Dorsolateral prefrontal cortex (tissue), 120 donors: ENCODE measurements at regions of chr9 and their contacts with region 1.

Region 1: DNA sequence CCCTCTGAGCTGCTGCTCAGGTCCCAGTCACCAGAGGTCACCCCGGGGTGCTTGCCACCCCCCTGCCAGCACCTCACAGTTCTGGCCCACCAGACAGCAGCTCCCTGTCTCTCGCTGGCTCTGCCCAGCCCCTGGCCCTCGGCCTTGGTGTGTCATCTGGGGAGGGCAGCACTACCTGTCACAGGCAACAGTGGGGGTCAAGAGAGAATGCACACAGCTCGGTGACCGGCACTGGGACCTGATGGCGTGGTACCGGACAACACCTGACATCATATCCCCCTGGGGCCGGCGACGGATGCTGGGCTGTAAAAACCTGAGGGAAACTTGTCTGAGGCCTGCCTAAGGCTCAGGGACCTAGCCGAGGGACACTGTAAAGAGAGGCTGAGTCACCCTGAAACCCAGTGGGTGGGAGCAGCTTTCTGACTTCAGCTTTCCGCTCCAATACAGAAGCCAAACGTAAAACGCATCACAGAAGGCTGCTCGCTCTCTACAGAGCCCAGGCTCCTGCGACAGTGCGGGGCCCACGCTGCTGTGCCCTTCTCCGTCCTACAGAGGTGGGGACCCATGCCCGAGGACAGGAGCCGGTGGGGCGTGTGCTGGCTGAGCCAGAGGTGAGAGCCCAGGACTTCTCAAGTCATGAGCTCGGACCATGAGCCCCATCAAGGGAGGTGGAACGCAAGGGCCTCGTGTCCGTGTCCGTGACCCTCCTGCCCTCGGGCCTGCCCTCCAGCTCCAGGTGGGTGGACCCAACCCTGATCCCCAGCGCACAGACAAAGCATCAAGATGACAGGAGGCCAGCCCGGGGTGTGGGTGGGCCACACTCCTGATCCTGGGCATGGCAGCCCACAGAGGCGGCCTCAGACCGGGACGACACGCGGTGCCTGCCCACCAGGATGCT is 5.3 kb downstream of the RALGDS start:
- DNase-seq: peak in 7 of 10 donors; percentile 18 to 82 (median 57)
- H3K4me3 ChIP-seq: peak overlapping the region in 51 of 59 donors; percentile 0 to 98 (median 34)
- H3K27ac ChIP-seq: peak overlapping the region; percentile 39 to 100 (median 98)
- H3K27me3 ChIP-seq: no peaks in the 10 kb centered on the region
- CTCF ChIP-seq: no peak

Region 2: GRCh38 chr9:133048569-133048968 is 67.1 kb before region 1 on chr9:
- intact Hi-C with region 1: loop called in 1 of 2 experiments (anchors 5 kb)
- DNase-seq: peak in 6 of 10 donors; percentile 36 to 66 (median 57)
- H3K4me3 ChIP-seq: no peak overlapping the region
- H3K27ac ChIP-seq: peak overlapping the region in 53 of 59 donors; percentile 9 to 98 (median 90)
- H3K27me3 ChIP-seq: no peaks in the 10 kb centered on the region
- CTCF ChIP-seq: peak in 54 of 56 donors; percentile 18 to 76 (median 56)

Region 3: GRCh38 chr9:133144137-133144903 is 28.6 kb after region 1 on chr9:
- intact Hi-C with region 1: loop called (anchors 1 to 2 kb)
- DNase-seq: peak in 9 of 10 donors; percentile 58 to 89 (median 81)
- H3K4me3 ChIP-seq: peak overlapping the region; percentile 19 to 77 (median 60)
- H3K27ac ChIP-seq: peak overlapping the region; percentile 52 to 100 (median 100)
- H3K27me3 ChIP-seq: no peaks in the 10 kb centered on the region
- CTCF ChIP-seq: peak in 55 of 56 donors; percentile 92 to 100 (median 99)